PC-9 (cell line): ENCODE measurements at regions of chr11 and their contacts with region 1.

Region 1: DNA sequence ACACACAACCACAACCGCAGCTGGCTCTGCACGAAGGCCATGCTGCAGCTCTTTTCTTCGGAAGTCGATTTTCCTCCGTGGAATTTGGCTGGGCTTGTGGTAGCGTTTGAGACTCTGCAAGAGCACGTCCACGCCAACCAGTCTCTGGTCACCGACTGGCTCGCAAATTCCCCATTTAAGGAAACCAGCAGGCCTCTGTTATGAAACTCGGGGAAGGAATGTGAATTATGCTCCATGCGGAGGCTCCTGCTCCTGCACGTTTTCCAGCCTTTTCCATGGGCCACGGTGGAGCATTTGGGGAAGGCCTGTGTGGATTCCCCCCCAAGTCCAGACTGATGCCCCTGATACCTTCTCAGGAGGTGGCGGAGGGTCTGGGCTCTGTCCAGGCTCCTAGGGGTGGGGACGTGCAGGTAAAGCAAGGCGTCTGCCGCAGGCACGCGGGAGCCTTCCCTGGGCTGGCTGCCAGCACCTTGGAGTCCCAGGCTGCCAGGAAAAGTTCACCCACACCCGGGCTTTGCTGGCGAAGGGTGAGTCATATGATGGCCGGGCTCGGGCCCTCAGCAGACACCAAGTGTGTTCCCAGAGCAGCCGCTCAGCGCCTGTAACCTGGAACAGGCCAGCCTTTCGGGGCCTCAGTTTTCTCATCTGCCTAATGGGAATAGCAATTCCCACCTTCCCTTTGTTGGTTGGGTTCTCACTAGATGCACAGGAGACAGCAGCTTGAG is 41.9 kb downstream of the LRP5 start:
- DNase-seq: peak; percentile 91 to 96
- H3K4me3 ChIP-seq: peak overlapping the region; percentile 5; the same call in 1 of the 2 replicates
- H3K27ac ChIP-seq: peak overlapping the region; percentile 64
- H3K4me1 ChIP-seq: peaks cover 33% of the 10 kb centered on the region
- H3K27me3 ChIP-seq: no peaks in the 10 kb centered on the region
- CTCF ChIP-seq: no peak

Region 2: GRCh38 chr11:68313574-68314202 is 40.6 kb before region 1 on chr11:
- CTCF ChIA-PET with region 1: no interaction called
- POLR2A ChIA-PET with region 1: interaction called, 4 read pairs
- intact Hi-C with region 1: loop called (anchors 1 kb)
- DNase-seq: no peak
- H3K4me3 ChIP-seq: peak overlapping the region; percentile 89
- H3K27ac ChIP-seq: peak overlapping the region; percentile 75
- H3K4me1 ChIP-seq: peaks cover 39% of the 10 kb centered on the region
- H3K27me3 ChIP-seq: no peaks in the 10 kb centered on the region
- CTCF ChIP-seq: no peak